ENCODE measurements at regions of chr4 and their contacts with region 1.

Region 1: GRCh38 chr4:15457406-15458201 is 12.1 kb upstream of the CC2D2A start:
- DNase-seq: no peak
- ATAC-seq: peak; percentile 74
- H3K4me3 Mint-ChIP-seq: no peak overlapping the region
- H3K27ac Mint-ChIP-seq: no peak overlapping the region
- H3K4me1 Mint-ChIP-seq: no peaks in the 10 kb centered on the region; the same call in 1 of the 2 replicates
- H3K27me3 Mint-ChIP-seq: no peaks in the 10 kb centered on the region
- CTCF ChIP-seq: peak; percentile 47; the same call in 1 of the 2 replicates

Region 2: DNA sequence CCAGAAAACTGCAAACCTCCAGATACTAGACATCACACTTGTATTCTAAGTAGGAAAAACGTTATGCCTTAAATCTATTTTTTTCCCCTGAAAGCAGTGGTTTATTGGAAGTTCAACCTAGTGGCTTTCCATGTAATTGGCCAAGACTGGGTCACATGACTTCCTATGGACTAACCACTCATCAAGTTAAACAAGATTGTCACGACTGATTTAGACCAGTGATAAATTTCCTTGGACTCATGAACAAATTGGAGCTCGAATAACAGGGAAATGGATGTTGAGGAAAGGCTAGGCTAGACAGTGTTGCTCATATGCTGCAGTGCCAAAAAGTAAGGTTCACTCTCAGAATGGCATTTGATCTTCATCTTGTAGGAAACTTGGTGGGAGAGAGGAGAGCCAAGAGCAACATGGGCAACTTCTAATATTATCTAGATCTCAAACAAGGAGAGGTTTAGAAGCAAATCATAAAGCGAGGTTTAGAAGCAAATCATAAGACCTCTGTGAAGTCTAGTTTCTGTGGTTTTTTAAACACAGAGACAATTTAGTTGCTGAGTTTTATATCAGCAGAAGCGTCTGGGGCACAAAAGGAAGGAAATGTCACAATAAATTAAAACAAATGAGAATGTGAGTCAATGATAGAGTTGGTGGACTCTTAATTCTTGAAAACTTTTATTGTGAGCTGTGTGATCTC is 1664.4 kb before region 1 on chr4:
- CTCF ChIA-PET with region 1: no interaction called
- POLR2A ChIA-PET with region 1: interaction called, 10 read pairs
- DNase-seq: no peak
- ATAC-seq: no peak
- H3K4me3 Mint-ChIP-seq: no peak overlapping the region
- H3K27ac Mint-ChIP-seq: no peak overlapping the region
- H3K4me1 Mint-ChIP-seq: peaks cover 9% of the 10 kb centered on the region
- H3K27me3 Mint-ChIP-seq: no peaks in the 10 kb centered on the region
- CTCF ChIP-seq: no peak

Region 3: GRCh38 chr4:15231265-15232091 is 226.1 kb before region 1 on chr4:
- CTCF ChIA-PET with region 1: interaction called, 13 read pairs
- POLR2A ChIA-PET with region 1: no interaction called
- DNase-seq: peak; percentile 77
- ATAC-seq: peak; percentile 96
- H3K4me3 Mint-ChIP-seq: no peak overlapping the region
- H3K27ac Mint-ChIP-seq: no peak overlapping the region
- H3K4me1 Mint-ChIP-seq: peaks cover 17% of the 10 kb centered on the region
- H3K27me3 Mint-ChIP-seq: no peaks in the 10 kb centered on the region
- CTCF ChIP-seq: peak; percentile 64

Region 4: GRCh38 chr4:15238720-15239119 is 218.9 kb before region 1 on chr4:
- CTCF ChIA-PET with region 1: interaction called, 12 read pairs
- POLR2A ChIA-PET with region 1: no interaction called
- DNase-seq: peak; percentile 43
- ATAC-seq: peak; percentile 99
- H3K4me3 Mint-ChIP-seq: no peak overlapping the region
- H3K27ac Mint-ChIP-seq: no peak overlapping the region
- H3K4me1 Mint-ChIP-seq: peaks cover under 1% of the 10 kb centered on the region; the same call in 1 of the 2 replicates
- H3K27me3 Mint-ChIP-seq: no peaks in the 10 kb centered on the region
- CTCF ChIP-seq: peak; percentile 36; the same call in 1 of the 2 replicates

Region 5: GRCh38 chr4:15469402-15470127 is 12.0 kb after region 1 on chr4 and contains the start of gene CC2D2A:
- CTCF ChIA-PET with region 1: interaction called, 13 read pairs
- POLR2A ChIA-PET with region 1: interaction called, 7 read pairs
- DNase-seq: no peak
- ATAC-seq: peak; percentile 91
- H3K4me3 Mint-ChIP-seq: peak within 1 kb of the TSS; percentile 71
- H3K27ac Mint-ChIP-seq: peak within 1 kb of the TSS; percentile 69; the same call in 1 of the 2 replicates
- H3K4me1 Mint-ChIP-seq: peaks cover 46% of the 10 kb centered on the region
- H3K27me3 Mint-ChIP-seq: no peaks in the 10 kb centered on the region
- CTCF ChIP-seq: no peak
- total RNA-seq, gene CC2D2A: 10.2 to 11.9 TPM (median 11.7 TPM) in 3 replicates

Region 6: GRCh38 chr4:15681207-15682015 is 223.8 kb after region 1 on chr4 and contains the start of gene FAM200B:
- CTCF ChIA-PET with region 1: no interaction called
- POLR2A ChIA-PET with region 1: no interaction called
- DNase-seq: peak; percentile 100
- ATAC-seq: peak; percentile 92
- H3K4me3 Mint-ChIP-seq: peak within 1 kb of the TSS; percentile 99
- H3K27ac Mint-ChIP-seq: peak within 1 kb of the TSS; percentile 99
- H3K4me1 Mint-ChIP-seq: peaks cover 67% of the 10 kb centered on the region
- H3K27me3 Mint-ChIP-seq: no peaks in the 10 kb centered on the region
- CTCF ChIP-seq: no peak
- total RNA-seq, gene FAM200B: 22.9 to 28.4 TPM (median 25.8 TPM) in 3 replicates